Heart right ventricle (tissue), 16 donors: ENCODE measurements at regions of chr10 and their contacts with region 1.

Region 1: GRCh38 chr10:93471110-93471651 is 11.0 kb downstream of the MYOF start:
- DNase-seq: no peak
- ATAC-seq: peak in 1 of 8 donors; percentile 71
- H3K4me3 ChIP-seq: no peak overlapping the region
- H3K27ac ChIP-seq: peak overlapping the region in 7 of 10 donors; percentile 25 to 70 (median 49)
- H3K4me1 ChIP-seq: peaks cover 5 to 75% (median 39%) of the 10 kb centered on the region in 9 donors
- H3K27me3 ChIP-seq: no peaks in the 10 kb centered on the region
- CTCF ChIP-seq: no peak

Region 2: DNA sequence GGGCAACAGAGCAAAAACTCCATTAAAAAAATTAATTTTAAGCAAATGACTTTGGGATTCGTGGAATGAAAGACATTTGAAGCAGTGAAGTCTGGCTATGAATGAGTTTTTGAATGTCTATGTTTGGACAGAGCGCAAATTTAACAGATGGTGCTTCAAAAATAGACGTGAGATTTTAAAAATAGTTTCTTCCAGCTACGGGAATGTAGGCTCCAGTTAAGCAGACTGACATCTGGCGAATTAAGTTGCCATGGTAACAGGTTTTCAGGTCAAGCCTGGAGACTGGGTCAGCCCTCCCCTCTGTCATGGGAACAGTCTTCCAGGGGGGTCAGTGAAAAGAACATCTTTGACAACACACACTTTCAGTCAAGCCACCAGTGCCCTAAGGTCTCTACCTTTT is 51.1 kb before region 1 on chr10:
- intact Hi-C with region 1: loop called in 1 of 10 experiments (anchors 5 kb)
- DNase-seq: peak in 1 of 2 donors; percentile 75
- ATAC-seq: peak; percentile 53 to 82 (median 70)
- H3K4me3 ChIP-seq: no peak overlapping the region
- H3K27ac ChIP-seq: peak overlapping the region; percentile 21 to 92 (median 73)
- H3K4me1 ChIP-seq: peaks cover 10 to 68% (median 47%) of the 10 kb centered on the region in 9 donors
- H3K27me3 ChIP-seq: no peaks in the 10 kb centered on the region
- CTCF ChIP-seq: no peak

Region 3: DNA sequence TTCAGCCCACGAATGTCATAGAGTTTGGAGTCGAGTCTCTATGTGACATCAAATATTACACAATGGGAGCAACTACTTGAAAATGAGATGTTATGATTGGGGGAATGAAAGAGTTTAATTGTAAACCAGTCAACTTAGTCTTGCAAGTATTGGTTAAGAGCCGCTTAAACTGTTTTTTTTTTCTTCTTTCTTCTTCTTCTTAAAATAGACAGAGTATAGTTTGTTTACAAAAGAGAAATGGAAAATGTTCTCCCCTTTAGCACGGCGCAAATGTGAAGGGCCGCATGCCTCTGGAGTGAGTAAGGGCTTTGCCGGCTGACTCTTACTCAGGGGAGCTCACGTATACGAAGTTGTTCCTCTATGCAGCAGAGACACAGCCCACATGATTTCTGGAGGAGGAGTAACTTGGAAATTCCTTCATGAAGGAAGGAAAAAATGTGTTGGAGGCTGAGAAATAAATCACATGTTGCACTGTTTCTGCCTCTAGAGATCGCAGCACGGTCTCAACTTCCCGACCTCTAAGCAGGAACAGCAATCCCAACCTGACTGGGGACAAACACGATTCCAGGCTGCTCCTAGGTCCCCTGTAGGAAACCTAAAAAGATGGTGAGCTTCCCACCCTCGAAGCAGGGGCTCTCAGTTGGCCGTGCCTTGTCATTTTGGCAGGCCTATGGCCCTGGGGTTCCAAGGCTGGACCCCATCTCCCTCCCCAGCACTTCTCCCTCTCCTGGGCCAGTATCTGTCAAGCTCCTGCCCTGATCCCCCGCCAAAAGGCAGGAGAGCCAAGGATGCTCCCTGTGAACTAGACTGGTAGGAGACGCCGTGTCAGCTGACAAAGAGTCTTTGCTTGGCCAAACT is 33.9 kb before region 1 on chr10:
- intact Hi-C with region 1: loop called in 2 of 10 experiments (anchors 5 kb)
- DNase-seq: peak; percentile 61 to 89
- ATAC-seq: peak; percentile 93 to 96 (median 96)
- H3K4me3 ChIP-seq: peak overlapping the region in 6 of 10 donors; percentile 8 to 27 (median 21)
- H3K27ac ChIP-seq: peak overlapping the region; percentile 88 to 99 (median 97)
- H3K4me1 ChIP-seq: peaks cover 18 to 82% (median 56%) of the 10 kb centered on the region in 9 donors
- H3K27me3 ChIP-seq: no peaks in the 10 kb centered on the region
- CTCF ChIP-seq: no peak

Region 4: DNA sequence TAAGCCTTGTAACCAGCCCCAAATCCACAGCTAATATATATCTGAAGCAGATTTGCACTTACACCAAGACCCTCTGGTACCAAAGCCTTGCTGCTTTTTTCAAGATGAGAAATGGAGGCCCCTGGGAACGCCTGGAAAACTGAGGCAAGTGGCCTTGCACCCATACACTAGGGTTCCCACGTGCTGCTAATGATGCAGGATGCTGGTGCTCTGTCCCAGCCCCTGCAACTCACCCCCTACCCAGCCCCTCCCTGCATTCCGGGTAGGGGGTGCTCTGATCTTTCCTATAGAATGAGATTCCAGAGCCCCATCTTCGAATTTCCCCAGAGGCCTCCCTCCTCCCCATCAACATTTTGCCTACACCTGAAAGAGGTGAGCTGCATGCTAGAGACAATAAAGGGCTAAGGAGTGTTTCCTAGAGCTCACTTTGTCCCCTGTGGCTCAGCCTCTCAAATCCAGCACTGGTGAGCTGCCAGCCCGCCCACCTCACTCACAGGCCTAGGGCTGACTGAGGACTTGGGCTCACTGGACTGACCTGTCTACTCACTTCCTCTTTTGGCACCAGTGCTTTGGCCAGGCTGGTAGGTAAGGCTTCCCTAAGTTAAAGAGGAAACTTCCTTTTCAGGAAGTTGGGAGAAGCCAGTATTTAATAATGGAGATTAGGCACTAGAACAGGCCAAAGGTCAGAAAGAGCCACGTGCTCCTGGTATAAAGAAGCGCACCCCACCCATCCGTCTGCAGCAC is 120.1 kb after region 1 on chr10:
- intact Hi-C with region 1: no loop called
- DNase-seq: no peak
- ATAC-seq: peak in 2 of 8 donors; percentile 33 to 61
- H3K4me3 ChIP-seq: no peak overlapping the region
- H3K27ac ChIP-seq: no peak overlapping the region
- H3K4me1 ChIP-seq: peaks cover 0 to 7% (median 0%) of the 10 kb centered on the region in 9 donors
- H3K27me3 ChIP-seq: no peaks in the 10 kb centered on the region
- CTCF ChIP-seq: no peak